ENCODE measurements at regions of chr7 and their contacts with region 1.

Region 1: GRCh38 chr7:139095194-139095659 is 14.3 kb downstream of the ZC3HAV1 start:
- DNase-seq: peak; percentile 84
- H3K4me3 Mint-ChIP-seq: peak overlapping the region; percentile 70
- H3K27ac Mint-ChIP-seq: peak overlapping the region; percentile 95
- H3K4me1 Mint-ChIP-seq: peaks cover 90% of the 10 kb centered on the region
- H3K27me3 Mint-ChIP-seq: no peaks in the 10 kb centered on the region

Region 2: DNA sequence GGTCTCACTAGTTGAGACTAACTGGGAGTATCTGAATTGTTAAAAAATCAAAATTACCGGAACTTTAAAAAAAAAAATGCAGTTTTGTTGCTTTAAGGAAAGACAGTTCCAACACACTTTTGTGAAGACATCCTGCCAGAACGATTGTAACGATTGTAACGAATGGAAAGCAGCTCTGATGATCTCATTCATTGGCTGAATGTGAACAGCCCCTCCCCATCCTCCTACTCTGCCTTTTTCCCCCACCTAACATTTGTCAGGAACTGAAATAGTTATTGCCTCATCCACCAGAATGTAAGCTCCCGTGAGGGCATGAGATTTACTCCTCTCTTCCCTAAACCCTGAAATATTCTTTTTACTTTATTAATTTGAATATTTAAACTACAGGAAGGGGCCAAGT is 36.3 kb before region 1 on chr7:
- CTCF ChIA-PET with region 1: no interaction called
- intact Hi-C with region 1: loop called (anchors 2 kb)
- DNase-seq: no peak
- H3K4me3 Mint-ChIP-seq: no peak overlapping the region
- H3K27ac Mint-ChIP-seq: peak overlapping the region; percentile 86
- H3K4me1 Mint-ChIP-seq: peaks cover 73% of the 10 kb centered on the region
- H3K27me3 Mint-ChIP-seq: no peaks in the 10 kb centered on the region

Region 3: DNA sequence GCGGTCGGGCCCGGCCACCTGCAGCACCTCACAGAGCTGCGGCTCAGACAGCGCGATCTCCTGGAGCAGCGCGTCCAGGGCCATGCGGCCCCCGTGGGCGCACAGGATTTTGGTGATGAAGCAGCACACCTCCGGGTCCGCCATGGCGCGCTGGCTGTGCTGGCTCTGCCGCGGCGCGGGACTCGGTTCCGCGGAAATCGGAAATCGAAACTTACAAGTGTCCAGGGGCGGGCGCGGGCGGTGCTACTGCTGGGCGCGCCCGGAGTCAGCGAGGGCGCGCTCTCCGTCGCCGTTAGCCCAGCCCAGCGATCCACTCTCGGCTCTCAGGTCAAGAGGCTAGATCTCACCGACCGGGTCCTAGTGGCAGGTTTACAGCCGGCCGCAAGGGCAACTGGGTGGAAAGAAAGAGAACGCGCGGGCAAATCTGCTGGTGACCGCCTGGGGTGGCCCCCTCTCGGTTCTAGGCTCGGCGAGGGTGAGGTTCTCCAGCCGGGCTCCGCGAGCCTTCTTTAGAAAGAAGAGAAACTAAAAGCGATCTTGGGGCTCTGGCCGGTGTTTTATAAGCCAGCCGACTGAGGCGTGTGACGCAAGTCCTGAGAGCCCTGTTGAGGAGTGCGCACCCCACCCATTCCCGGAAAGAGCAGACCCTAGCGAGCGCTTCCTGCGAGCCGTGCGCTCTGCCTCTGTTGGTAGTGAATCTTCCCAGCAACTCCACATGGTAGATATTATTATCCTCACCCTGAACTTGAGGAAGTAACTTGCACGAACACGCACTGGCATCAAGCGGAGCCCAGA is 14.2 kb after region 1 on chr7 and contains the start of gene ZC3HAV1:
- CTCF ChIA-PET with region 1: interaction called, 27 read pairs
- intact Hi-C with region 1: loop called (anchors 1 kb)
- DNase-seq: peak; percentile 90
- H3K4me3 Mint-ChIP-seq: peak within 1 kb of the TSS; percentile 92
- H3K27ac Mint-ChIP-seq: peak within 1 kb of the TSS; percentile 95
- H3K4me1 Mint-ChIP-seq: peaks cover 34% of the 10 kb centered on the region
- H3K27me3 Mint-ChIP-seq: no peaks in the 10 kb centered on the region
- total RNA-seq, gene ZC3HAV1: 131 to 134 TPM

Region 4: DNA sequence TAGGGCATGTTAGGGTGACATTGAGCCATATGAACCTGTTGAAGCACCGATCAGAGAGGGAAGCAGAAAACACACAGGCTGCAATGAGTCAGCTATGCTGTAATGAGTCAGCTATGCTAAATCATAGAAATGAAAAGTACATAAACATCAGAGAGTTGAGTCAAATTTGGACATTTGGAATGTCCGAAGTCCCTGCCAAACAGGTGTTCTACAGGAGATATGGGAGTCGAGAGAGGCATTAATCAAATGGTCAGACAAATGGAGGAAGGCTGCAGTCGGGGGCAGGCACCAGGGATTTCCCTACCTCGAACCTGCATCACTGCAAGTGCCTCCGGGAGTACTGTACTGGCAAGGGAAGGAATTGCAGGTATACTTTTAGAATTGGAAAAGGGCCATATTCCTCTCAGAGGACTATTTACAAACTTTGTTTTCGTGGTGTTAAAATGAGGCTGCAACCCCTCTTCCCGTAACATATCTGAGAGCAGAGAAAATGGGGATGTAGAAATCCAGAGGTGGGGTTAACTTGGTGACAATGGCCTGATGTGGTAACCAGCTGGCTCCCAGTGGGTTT is 23.1 kb after region 1 on chr7:
- CTCF ChIA-PET with region 1: interaction called, 7 read pairs
- intact Hi-C with region 1: loop called (anchors 1 kb)
- DNase-seq: peak; percentile 76
- H3K4me3 Mint-ChIP-seq: peak overlapping the region; percentile 46
- H3K27ac Mint-ChIP-seq: peak overlapping the region; percentile 17
- H3K4me1 Mint-ChIP-seq: peaks cover 52% of the 10 kb centered on the region
- H3K27me3 Mint-ChIP-seq: no peaks in the 10 kb centered on the region

Region 5: GRCh38 chr7:139133335-139134139 is 38.3 kb after region 1 on chr7:
- CTCF ChIA-PET with region 1: interaction called, 5 read pairs
- intact Hi-C with region 1: loop called (anchors 1 kb)
- DNase-seq: peak; percentile 92
- H3K4me3 Mint-ChIP-seq: peak overlapping the region; percentile 84
- H3K27ac Mint-ChIP-seq: peak overlapping the region; percentile 68
- H3K4me1 Mint-ChIP-seq: peaks cover 22% of the 10 kb centered on the region
- H3K27me3 Mint-ChIP-seq: no peaks in the 10 kb centered on the region

Measured in activated naive CD4-positive, alpha-beta T cell treated with anti-CD3 and anti-CD28 coated beads for 36 hours (primary cell).